ENCODE measurements at regions of chr2 and their contacts with region 1.

Region 1: GRCh38 chr2:176140513-176141317 is 10.6 kb upstream of the HOXD4 start:
- DNase-seq: peak; percentile 75
- H3K4me3 Mint-ChIP-seq: no peak overlapping the region
- H3K27ac Mint-ChIP-seq: no peak overlapping the region
- H3K4me1 Mint-ChIP-seq: peaks cover 15% of the 10 kb centered on the region
- H3K27me3 Mint-ChIP-seq: peaks cover 74% of the 10 kb centered on the region

Region 2: DNA sequence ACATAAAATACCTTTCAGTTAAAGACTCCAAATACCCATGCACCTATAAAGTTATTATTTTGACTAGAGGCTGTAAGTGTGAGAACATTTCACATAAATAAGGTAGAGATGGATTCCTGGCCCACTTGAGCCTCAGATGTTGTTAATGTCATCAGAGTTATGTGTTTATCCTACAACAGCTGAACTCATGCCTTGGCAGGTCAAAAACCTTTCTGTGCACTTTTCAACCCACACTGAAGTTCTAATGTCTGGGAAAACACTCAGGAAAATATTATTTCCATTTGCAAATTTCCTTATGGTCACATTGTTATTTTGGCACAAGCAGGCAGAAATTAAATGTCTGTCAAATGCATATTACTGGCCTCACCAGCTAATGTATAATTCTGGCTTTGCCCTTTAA is 347.8 kb before region 1 on chr2:
- CTCF ChIA-PET with region 1: no interaction called
- POLR2A ChIA-PET with region 1: no interaction called
- intact Hi-C with region 1: no loop called
- DNase-seq: no peak
- H3K4me3 Mint-ChIP-seq: no peak overlapping the region
- H3K27ac Mint-ChIP-seq: no peak overlapping the region
- H3K4me1 Mint-ChIP-seq: no peaks in the 10 kb centered on the region
- H3K27me3 Mint-ChIP-seq: no peaks in the 10 kb centered on the region

Region 3: GRCh38 chr2:176554101-176555048 is 413.7 kb after region 1 on chr2:
- CTCF ChIA-PET with region 1: interaction called, 14 read pairs
- POLR2A ChIA-PET with region 1: no interaction called
- intact Hi-C with region 1: loop called (anchors 1 kb)
- DNase-seq: peak; percentile 36
- H3K4me3 Mint-ChIP-seq: peak overlapping the region; percentile 66
- H3K27ac Mint-ChIP-seq: no peak overlapping the region
- H3K4me1 Mint-ChIP-seq: peaks cover 9% of the 10 kb centered on the region
- H3K27me3 Mint-ChIP-seq: peaks cover 53% of the 10 kb centered on the region

Region 4: DNA sequence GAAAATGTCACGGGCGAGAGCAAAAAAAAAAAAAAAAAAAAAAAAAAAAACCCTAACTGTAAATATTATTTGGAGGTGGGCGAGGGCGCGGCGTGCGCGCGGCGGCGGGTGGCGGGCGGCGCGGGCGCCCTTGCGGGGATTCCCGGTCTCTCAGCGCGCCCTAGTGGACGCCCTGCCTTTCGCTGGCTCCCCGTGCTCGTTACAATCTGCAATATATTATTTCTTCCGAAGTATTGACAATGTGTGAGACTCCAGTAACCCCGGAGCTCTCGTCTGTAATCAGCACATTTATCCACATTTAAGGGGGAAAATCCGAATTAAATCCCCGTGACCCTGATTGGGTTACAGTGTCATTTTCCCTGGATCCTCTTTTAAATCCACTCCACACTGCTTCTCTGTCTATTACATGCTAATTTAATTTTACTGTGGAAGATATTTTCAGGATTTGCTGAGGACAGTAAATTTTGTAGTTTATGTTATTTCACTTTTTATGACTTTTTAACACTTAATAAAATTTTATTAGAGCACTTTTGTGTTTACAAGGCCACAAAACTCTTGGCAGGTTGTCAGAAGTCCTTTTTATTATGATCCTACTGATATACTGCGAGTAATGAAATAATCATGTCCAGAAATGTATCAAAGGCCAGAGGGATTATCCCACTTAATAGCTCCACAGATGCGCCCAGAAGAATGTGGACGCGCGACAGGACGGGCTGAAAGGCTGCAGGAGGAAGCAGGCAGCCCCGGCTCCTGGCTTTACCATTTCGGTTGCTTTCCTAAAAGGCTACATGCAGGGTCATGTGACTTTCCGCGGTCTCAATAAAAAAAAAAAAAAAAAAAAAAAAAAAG is 497.7 kb after region 1 on chr2:
- CTCF ChIA-PET with region 1: interaction called, 15 read pairs
- POLR2A ChIA-PET with region 1: no interaction called
- intact Hi-C with region 1: no loop called
- DNase-seq: peak; percentile 65
- H3K4me3 Mint-ChIP-seq: peak overlapping the region; percentile 58
- H3K27ac Mint-ChIP-seq: no peak overlapping the region
- H3K4me1 Mint-ChIP-seq: peaks cover 2% of the 10 kb centered on the region
- H3K27me3 Mint-ChIP-seq: peaks cover 45% of the 10 kb centered on the region

Measured in activated CD4-positive, alpha-beta memory T cell treated with anti-CD3 and anti-CD28 coated beads for 36 hours (primary cell).